ENCODE measurements at regions of chr10 and their contacts with region 1.

Region 1: GRCh38 chr10:4195213-4195612 is 410.2 kb upstream of the KLF6 start:
- DNase-seq: no peak
- H3K4me3 ChIP-seq: no peak overlapping the region
- H3K27ac ChIP-seq: no peak overlapping the region
- H3K4me1 ChIP-seq: no peaks in the 10 kb centered on the region
- H3K27me3 ChIP-seq: no peaks in the 10 kb centered on the region
- CTCF ChIP-seq: no peak
- POLR2A ChIP-seq: no peak

Region 2: DNA sequence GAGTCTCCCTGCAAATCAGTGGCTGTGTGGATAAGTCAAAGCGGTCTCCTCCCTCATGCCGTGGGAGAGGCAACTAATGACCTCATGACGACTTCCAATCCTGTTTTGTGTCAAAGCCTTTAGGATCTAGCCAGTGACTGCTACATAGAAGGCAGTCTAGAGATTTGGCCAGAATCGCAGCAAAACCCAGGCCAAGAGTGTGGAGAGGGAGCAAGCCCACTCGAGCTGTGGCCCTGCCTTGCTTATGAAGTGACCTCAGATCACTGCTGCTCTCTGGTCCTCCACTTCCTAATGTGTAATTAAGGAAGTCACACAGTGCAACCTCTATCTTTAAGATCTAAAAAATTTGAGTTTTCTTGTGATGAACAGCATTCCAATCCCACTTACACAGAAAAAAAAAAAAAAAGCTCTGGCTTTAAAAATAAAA is 113.5 kb before region 1 on chr10:
- intact Hi-C with region 1: loop called (anchors 10 kb)
- DNase-seq: peak in 1 of 2 donors; percentile 33
- H3K4me3 ChIP-seq: no peak overlapping the region
- H3K27ac ChIP-seq: peak overlapping the region; percentile 15 to 87
- H3K4me1 ChIP-seq: no peaks in the 10 kb centered on the region
- H3K27me3 ChIP-seq: no peaks in the 10 kb centered on the region
- CTCF ChIP-seq: no peak
- POLR2A ChIP-seq: no peak